CD4-positive, alpha-beta memory T cell (primary cell): ENCODE measurements at regions of chr16 and their contacts with region 1.

Region 1: DNA sequence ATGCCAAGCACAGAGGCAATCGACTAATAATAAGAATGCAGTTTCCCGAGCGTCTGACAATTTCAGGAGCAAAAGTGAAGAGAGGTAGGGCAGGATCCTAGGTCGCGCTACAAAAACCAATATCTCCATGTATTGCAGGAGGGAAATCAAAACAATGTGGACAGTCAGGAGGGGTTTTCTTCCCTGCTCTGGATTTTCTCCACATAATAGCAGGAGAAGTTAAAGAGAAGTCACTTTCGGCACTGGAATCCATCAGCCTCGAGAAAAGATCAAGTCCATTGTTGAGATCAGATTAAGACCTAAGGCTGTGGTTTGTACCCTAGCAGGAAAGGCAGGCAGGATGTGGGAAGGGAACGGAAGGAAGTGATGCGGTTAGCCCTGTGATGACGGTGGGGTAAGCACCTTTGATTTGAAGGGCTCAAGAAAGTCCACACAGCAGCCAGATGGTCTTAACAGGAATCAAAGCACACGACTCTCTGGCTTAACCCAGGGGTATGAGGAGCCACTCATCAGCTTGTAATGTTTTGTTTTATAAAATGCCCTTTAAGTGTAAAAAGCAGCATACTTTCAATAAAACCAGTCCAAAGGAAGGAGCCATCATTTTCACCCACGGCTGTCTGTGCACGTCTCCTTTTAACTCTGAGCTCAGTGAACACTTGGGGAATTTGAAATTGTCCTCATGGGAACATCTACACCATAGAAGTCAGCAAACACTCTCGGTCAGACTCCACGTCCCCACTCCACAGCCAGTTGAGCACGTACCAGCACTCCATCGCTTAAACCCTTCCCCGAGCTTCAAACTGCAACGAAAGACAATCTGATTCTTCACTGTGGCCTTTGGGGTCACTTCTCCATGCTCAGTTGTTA is 15.8 kb upstream of the AKTIP start:
- DNase-seq: peak; percentile 83 to 89 (median 86)
- H3K4me3 ChIP-seq: peak overlapping the region; percentile 17 to 45
- H3K4me3 Mint-ChIP-seq: peak overlapping the region; percentile 79 to 92 (median 85)
- H3K27ac ChIP-seq: peak overlapping the region; percentile 43
- H3K27ac Mint-ChIP-seq: peak overlapping the region; percentile 85 to 97 (median 94)
- H3K4me1 ChIP-seq: peaks cover 43% of the 10 kb centered on the region
- H3K4me1 Mint-ChIP-seq: peaks cover 52 to 83% (median 59%) of the 10 kb centered on the region in 4 donors
- H3K27me3 ChIP-seq: no peaks in the 10 kb centered on the region
- H3K27me3 Mint-ChIP-seq: no peaks in the 10 kb centered on the region

Region 2: GRCh38 chr16:53549970-53550690 is 31.3 kb after region 1 on chr16:
- CTCF ChIA-PET with region 1: interaction called, 4 read pairs
- POLR2A ChIA-PET with region 1: interaction called, 13 read pairs
- intact Hi-C with region 1: no loop called
- DNase-seq: peak; percentile 50 to 59 (median 57)
- H3K4me3 ChIP-seq: no peak overlapping the region
- H3K4me3 Mint-ChIP-seq: peak overlapping the region in 2 of 8 donors; percentile 4 to 25
- H3K27ac ChIP-seq: no peak overlapping the region
- H3K27ac Mint-ChIP-seq: peak overlapping the region in 1 of 7 donors; percentile 40
- H3K4me1 ChIP-seq: peaks cover 36% of the 10 kb centered on the region
- H3K4me1 Mint-ChIP-seq: peaks cover 15 to 39% (median 27%) of the 10 kb centered on the region in 4 donors
- H3K27me3 ChIP-seq: no peaks in the 10 kb centered on the region
- H3K27me3 Mint-ChIP-seq: peaks cover 0 to 2% of the 10 kb centered on the region in 2 donors

Region 3: GRCh38 chr16:53703590-53704444 is 185.0 kb after region 1 on chr16 and contains the starts of genes FTO and RPGRIP1L:
- CTCF ChIA-PET with region 1: no interaction called
- POLR2A ChIA-PET with region 1: interaction called, 3 read pairs
- intact Hi-C with region 1: loop called (anchors 5 kb)
- DNase-seq: peak; percentile 95 to 97 (median 96)
- H3K4me3 ChIP-seq: peak within 1 kb of the TSS; percentile 54 to 85
- H3K4me3 Mint-ChIP-seq: peak within 1 kb of the TSS; percentile 96 to 100 (median 98)
- H3K27ac ChIP-seq: peak within 1 kb of the TSS; percentile 59
- H3K27ac Mint-ChIP-seq: peak within 1 kb of the TSS; percentile 90 to 99 (median 97)
- H3K4me1 ChIP-seq: peaks cover 23% of the 10 kb centered on the region
- H3K4me1 Mint-ChIP-seq: peaks cover 22 to 47% (median 36%) of the 10 kb centered on the region in 4 donors
- H3K27me3 ChIP-seq: no peaks in the 10 kb centered on the region
- H3K27me3 Mint-ChIP-seq: no peaks in the 10 kb centered on the region
- total RNA-seq, gene FTO: 61.5 to 68.8 TPM
- total RNA-seq, gene RPGRIP1L: 4.2 to 4.3 TPM